Activated T-helper 1 cell treated with anti-CD3 and anti-CD28 coated beads, Interleukin-12 subunit alpha, Interleukin-12 subunit beta, Interleukin-2, Interleukin-4 antibody, amounts not matched to agents 30 ng/mL and 10 ng/mL and 1 ng/mL, durations not matched to agents 14 hours and 24 hours and 36 hours (primary cell): ENCODE measurements at regions of chr3 and their contacts with region 1.

Region 1: GRCh38 chr3:146544002-146544928 is at the start of gene PLSCR1:
- DNase-seq: peak; percentile 84
- H3K4me3 Mint-ChIP-seq: peak within 1 kb of the TSS; percentile 95
- H3K27ac Mint-ChIP-seq: peak within 1 kb of the TSS; percentile 96
- H3K4me1 Mint-ChIP-seq: peaks cover 76% of the 10 kb centered on the region
- H3K27me3 Mint-ChIP-seq: no peaks in the 10 kb centered on the region
- total RNA-seq, gene PLSCR1: 98.9 and 101 TPM in 2 replicates

Region 2: GRCh38 chr3:144775551-144775950 is 1768.7 kb before region 1 on chr3:
- intact Hi-C with region 1: no loop called
- DNase-seq: no peak
- H3K4me3 Mint-ChIP-seq: no peak overlapping the region
- H3K27ac Mint-ChIP-seq: no peak overlapping the region
- H3K4me1 Mint-ChIP-seq: no peaks in the 10 kb centered on the region
- H3K27me3 Mint-ChIP-seq: no peaks in the 10 kb centered on the region

Region 3: DNA sequence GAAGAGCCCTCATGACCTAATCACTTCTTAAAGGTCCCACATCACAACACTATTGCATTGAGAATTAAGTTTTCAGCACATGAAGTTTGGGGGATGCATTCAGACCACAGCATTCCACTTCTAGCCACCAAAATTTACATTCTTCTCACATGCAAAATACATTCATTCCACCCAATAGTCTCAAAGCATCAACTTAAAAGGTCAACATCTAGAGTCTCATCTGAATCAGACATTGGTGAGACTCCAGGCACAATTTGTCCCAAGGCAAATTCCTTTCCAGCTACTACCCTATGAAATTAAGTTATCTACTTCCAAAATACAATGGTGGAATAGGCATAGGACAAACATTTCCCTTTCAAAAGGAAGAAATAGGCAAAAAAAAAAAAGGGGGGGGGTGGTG is 139.8 kb before region 1 on chr3:
- intact Hi-C with region 1: no loop called
- DNase-seq: no peak
- H3K4me3 Mint-ChIP-seq: no peak overlapping the region
- H3K27ac Mint-ChIP-seq: no peak overlapping the region
- H3K4me1 Mint-ChIP-seq: no peaks in the 10 kb centered on the region
- H3K27me3 Mint-ChIP-seq: no peaks in the 10 kb centered on the region

Region 4: GRCh38 chr3:146469150-146470017 is 74.9 kb before region 1 on chr3 and contains the start of gene PLSCR2:
- intact Hi-C with region 1: loop called (anchors 2 kb)
- DNase-seq: peak; percentile 54
- H3K4me3 Mint-ChIP-seq: peak within 1 kb of the TSS; percentile 82
- H3K27ac Mint-ChIP-seq: peak within 1 kb of the TSS; percentile 50
- H3K4me1 Mint-ChIP-seq: peaks cover 7% of the 10 kb centered on the region
- H3K27me3 Mint-ChIP-seq: peaks cover 4% of the 10 kb centered on the region
- total RNA-seq, gene PLSCR2: not detected in 2 replicates

Region 5: GRCh38 chr3:146503461-146504202 is 40.6 kb before region 1 on chr3:
- intact Hi-C with region 1: loop called (anchors 2 kb)
- DNase-seq: no peak
- H3K4me3 Mint-ChIP-seq: no peak overlapping the region
- H3K27ac Mint-ChIP-seq: peak overlapping the region; percentile 5
- H3K4me1 Mint-ChIP-seq: peaks cover 45% of the 10 kb centered on the region
- H3K27me3 Mint-ChIP-seq: no peaks in the 10 kb centered on the region

Region 6: DNA sequence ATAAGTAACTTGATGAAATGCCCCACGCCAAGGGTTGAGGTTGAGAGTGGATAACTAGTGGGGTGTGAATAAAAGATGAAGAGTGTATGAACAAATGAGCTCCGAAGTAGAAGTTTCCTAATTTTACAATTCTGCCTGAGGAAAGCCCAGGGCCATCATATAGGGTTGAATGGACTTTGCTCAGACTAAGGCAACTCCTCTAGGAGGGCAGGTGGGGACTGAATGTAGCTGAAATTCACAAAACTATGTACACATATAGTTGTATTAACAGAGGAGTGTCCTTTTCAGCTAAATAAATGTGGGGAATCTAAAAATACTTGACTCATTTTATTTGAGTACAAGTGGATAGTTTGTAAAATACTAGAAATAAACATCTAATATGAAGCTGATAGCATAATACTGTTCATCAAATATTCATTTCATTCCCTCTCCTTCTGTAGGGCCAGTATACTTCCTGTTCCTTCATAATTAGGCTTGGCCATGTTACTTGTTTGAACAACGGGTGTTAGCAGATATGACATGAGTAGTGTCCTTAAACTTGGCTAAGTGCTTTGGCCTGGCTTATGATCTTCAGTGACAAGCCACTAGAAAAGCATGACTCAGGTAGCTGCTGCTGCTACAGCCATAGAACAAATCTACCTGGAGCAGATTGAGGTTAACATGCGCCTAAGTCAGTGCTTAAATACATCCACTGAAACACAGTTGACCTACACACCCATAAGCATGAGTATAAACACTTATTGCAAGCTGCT is 26.4 kb before region 1 on chr3:
- intact Hi-C with region 1: loop called (anchors 2 kb)
- DNase-seq: no peak
- H3K4me3 Mint-ChIP-seq: no peak overlapping the region
- H3K27ac Mint-ChIP-seq: no peak overlapping the region
- H3K4me1 Mint-ChIP-seq: peaks cover 40% of the 10 kb centered on the region
- H3K27me3 Mint-ChIP-seq: no peaks in the 10 kb centered on the region

Region 7: DNA sequence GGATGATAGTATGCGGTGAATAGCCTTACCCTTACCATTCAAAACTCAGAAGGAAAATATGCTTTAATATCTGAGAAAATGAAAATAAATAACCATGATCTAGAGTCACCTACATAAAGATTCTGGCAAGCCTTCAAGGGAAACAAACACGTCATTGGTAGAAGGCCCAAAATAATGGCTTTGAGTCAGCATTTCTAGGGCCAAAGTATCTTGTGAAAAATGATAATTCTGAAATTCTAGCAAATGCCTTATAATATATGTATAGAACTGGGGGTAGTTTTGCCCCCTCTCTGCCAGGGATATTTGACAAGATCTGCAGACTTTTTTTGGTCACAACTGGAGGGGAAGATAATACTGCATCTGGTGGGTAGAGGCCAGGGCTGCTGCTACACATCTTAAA is 15.2 kb before region 1 on chr3:
- intact Hi-C with region 1: loop called (anchors 1 kb)
- DNase-seq: no peak
- H3K4me3 Mint-ChIP-seq: no peak overlapping the region
- H3K27ac Mint-ChIP-seq: no peak overlapping the region
- H3K4me1 Mint-ChIP-seq: peaks cover 28% of the 10 kb centered on the region
- H3K27me3 Mint-ChIP-seq: no peaks in the 10 kb centered on the region

Region 8: DNA sequence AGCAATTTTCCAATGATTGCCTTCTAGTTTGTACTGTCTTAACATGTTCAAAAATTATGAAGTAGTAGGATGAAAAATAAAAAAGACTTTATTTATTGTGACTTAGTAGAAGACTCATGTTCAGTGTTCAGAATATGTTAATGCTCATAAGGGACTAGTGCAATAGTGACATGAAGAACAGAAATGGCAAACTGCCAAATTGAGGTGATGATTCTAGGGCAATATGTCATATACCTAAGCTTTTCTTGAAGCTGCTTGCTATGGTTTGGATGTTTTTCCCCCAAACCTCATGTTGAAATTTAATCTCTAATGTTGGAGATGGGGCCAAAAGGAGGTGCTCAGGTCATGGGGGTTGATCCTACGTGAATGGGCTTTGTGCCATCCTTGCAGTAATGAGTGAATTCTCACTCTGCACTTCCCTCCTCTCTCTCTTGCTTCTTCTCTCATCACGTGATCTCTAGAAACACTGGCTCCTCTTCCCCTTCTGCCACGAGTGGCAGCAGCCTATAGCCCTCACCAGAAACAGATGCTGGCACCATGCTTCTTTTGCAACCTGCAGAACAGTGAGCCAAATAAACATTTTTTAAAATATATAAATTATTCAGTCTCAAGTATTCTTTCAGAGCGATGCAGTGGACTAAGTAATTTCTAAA is 13.4 kb after region 1 on chr3:
- intact Hi-C with region 1: loop called (anchors 2 kb)
- DNase-seq: no peak
- H3K4me3 Mint-ChIP-seq: no peak overlapping the region
- H3K27ac Mint-ChIP-seq: no peak overlapping the region
- H3K4me1 Mint-ChIP-seq: peaks cover 18% of the 10 kb centered on the region
- H3K27me3 Mint-ChIP-seq: no peaks in the 10 kb centered on the region

Region 9: GRCh38 chr3:146577662-146578061 is 33.4 kb after region 1 on chr3:
- intact Hi-C with region 1: loop called (anchors 1 kb)
- DNase-seq: no peak
- H3K4me3 Mint-ChIP-seq: no peak overlapping the region
- H3K27ac Mint-ChIP-seq: no peak overlapping the region
- H3K4me1 Mint-ChIP-seq: no peaks in the 10 kb centered on the region
- H3K27me3 Mint-ChIP-seq: peaks cover 6% of the 10 kb centered on the region